Activated T-helper 1 cell treated with anti-CD3 and anti-CD28 coated beads, Interleukin-12 subunit alpha, Interleukin-12 subunit beta, Interleukin-2, Interleukin-4 antibody, amounts not matched to agents 30 ng/mL and 10 ng/mL and 1 ng/mL, durations not matched to agents 14 hours and 24 hours and 36 hours (primary cell): ENCODE measurements at regions of chr1 and their contacts with region 1.

Region 1: GRCh38 chr1:182084487-182085316 is 23.2 kb upstream of the ZNF648 start:
- DNase-seq: peak; percentile 76
- H3K4me3 Mint-ChIP-seq: peak overlapping the region; percentile 26
- H3K27ac Mint-ChIP-seq: peak overlapping the region; percentile 61
- H3K4me1 Mint-ChIP-seq: peaks cover 55% of the 10 kb centered on the region
- H3K27me3 Mint-ChIP-seq: no peaks in the 10 kb centered on the region

Region 2: DNA sequence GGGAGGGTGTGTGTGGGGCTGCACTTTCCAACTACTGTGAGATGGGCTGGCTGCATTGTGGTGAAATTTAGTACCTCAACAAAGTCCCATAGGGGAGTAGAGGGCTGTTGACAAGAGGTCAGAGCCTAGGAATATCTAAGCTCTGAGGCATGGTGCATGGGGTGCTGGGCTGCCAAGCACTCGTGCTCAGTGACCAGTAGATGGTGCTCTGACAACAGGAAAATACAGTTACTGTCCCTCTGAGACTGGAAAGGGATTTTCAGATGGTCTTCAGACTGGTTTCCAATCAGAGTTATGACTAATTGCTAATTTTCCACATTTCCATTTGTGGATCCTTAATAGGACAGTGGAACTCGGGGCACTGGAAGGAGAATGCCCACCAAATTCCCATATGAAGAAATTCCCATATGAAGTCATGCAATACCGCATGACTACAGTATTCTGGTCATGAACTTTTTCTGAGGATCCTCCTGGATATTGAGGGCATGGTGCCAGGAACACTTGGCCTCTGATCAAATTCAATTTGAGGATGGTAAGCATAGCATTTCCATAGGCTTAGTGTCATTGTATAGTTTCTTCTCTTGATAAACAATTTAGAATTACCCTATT is 605.5 kb before region 1 on chr1:
- intact Hi-C with region 1: loop called (anchors 1 kb)
- DNase-seq: peak; percentile 7
- H3K4me3 Mint-ChIP-seq: no peak overlapping the region
- H3K27ac Mint-ChIP-seq: no peak overlapping the region
- H3K4me1 Mint-ChIP-seq: peaks cover 11% of the 10 kb centered on the region
- H3K27me3 Mint-ChIP-seq: peaks cover 34% of the 10 kb centered on the region

Region 3: DNA sequence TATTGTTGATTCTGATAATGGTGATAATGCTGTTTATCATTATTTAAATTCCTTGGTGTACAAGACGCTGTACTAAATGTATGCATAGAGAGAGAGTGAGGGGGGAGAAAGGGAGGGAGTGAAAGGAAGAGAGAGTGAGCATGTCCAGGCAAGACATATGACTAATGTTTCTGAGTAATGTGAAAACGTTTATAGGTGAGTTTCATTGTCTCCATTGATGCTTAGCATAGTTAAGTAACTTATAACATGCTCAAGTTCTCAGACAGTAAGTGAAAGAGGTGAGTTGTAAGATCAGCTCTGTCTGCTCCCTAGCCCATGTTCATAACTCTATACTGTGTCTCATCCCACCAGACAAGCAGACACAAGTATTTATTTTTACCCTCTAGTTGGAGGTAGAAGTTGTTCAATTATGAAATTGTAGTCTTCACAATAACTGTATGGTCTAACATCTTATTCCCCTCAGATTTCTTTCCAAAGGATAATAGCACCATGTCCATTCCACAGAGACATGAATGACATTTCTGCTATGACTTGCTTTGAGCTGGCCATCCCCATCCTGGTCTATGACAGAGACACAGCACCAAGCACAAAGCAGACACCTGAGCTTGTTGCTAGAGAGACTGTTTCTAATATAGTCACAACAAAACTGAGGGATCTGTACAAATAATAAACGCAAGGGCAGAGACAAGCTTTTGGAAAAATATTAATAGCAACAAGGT is 316.3 kb before region 1 on chr1:
- intact Hi-C with region 1: no loop called
- DNase-seq: no peak
- H3K4me3 Mint-ChIP-seq: no peak overlapping the region
- H3K27ac Mint-ChIP-seq: no peak overlapping the region
- H3K4me1 Mint-ChIP-seq: no peaks in the 10 kb centered on the region
- H3K27me3 Mint-ChIP-seq: peaks cover 4% of the 10 kb centered on the region

Region 4: DNA sequence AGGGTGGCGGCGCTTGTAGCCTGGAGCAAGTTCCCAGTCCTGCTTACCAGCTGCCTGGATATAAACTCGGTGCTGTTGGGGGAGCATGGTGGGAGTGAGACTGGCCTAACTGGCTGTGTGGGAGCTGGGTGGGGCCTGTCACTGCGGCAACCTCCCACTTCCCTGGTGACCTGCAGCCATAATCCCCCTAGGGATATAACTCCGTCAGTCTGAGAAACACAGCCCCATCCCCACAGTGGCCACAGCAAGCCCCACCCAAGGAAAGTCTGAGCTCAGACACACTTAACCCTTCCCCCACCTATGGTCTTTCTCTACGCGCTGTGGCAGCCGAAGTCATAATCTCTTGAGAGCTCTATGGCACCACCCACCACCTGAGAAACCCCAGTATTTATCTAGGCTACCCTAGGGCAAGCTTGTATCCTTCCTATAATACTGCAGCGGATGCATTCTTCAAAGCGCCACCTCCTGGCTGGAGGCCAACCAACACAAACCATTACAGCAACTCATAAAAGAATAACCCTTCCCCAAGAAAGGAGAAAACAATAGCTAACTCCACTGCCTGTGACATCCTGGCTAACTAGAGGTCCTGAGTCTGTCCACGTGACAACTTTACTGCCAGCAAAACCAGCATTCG is 80.6 kb before region 1 on chr1:
- intact Hi-C with region 1: no loop called
- DNase-seq: no peak
- H3K4me3 Mint-ChIP-seq: no peak overlapping the region
- H3K27ac Mint-ChIP-seq: no peak overlapping the region
- H3K4me1 Mint-ChIP-seq: no peaks in the 10 kb centered on the region
- H3K27me3 Mint-ChIP-seq: peaks cover 6% of the 10 kb centered on the region

Region 5: GRCh38 chr1:182095965-182096364 is 11.3 kb after region 1 on chr1:
- intact Hi-C with region 1: no loop called
- DNase-seq: no peak
- H3K4me3 Mint-ChIP-seq: no peak overlapping the region
- H3K27ac Mint-ChIP-seq: no peak overlapping the region
- H3K4me1 Mint-ChIP-seq: no peaks in the 10 kb centered on the region
- H3K27me3 Mint-ChIP-seq: peaks cover 27% of the 10 kb centered on the region

Region 6: DNA sequence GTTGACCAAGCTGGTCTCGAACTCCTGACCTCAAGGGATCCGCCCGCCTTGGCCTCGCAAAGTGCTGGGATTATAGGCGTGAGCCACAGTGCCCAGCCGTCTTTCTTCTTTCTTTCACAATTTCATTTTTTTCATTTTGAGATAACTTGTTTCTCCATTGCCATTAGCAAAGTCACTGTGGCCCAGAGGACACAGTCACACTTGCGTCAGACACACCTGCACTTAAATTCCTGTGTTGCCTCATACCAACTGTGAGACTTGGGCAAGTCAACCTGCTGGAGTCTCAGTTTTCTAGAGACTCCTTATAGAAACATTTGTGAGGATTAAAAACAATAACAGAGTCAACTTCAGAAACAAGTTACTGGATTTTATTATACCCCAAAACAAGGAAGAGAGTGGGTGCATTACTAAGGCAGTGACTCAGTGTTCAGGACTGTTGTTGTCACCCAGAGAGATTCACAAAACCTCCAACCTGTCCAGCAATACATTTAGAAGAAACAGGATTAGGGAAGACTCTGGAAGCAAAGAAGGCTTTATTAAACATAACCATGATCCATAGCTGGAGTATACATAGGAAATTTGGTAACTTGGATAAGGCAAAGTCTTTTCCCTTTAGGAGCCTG is 313.2 kb after region 1 on chr1:
- intact Hi-C with region 1: loop called (anchors 1 kb)
- DNase-seq: no peak
- H3K4me3 Mint-ChIP-seq: no peak overlapping the region
- H3K27ac Mint-ChIP-seq: no peak overlapping the region
- H3K4me1 Mint-ChIP-seq: peaks cover 13% of the 10 kb centered on the region
- H3K27me3 Mint-ChIP-seq: peaks cover 13% of the 10 kb centered on the region

Region 7: GRCh38 chr1:182595641-182596240 is 511.0 kb after region 1 on chr1:
- intact Hi-C with region 1: loop called (anchors 2 kb)
- DNase-seq: peak; percentile 34
- H3K4me3 Mint-ChIP-seq: no peak overlapping the region
- H3K27ac Mint-ChIP-seq: no peak overlapping the region
- H3K4me1 Mint-ChIP-seq: peaks cover 16% of the 10 kb centered on the region
- H3K27me3 Mint-ChIP-seq: peaks cover 2% of the 10 kb centered on the region

Region 8: DNA sequence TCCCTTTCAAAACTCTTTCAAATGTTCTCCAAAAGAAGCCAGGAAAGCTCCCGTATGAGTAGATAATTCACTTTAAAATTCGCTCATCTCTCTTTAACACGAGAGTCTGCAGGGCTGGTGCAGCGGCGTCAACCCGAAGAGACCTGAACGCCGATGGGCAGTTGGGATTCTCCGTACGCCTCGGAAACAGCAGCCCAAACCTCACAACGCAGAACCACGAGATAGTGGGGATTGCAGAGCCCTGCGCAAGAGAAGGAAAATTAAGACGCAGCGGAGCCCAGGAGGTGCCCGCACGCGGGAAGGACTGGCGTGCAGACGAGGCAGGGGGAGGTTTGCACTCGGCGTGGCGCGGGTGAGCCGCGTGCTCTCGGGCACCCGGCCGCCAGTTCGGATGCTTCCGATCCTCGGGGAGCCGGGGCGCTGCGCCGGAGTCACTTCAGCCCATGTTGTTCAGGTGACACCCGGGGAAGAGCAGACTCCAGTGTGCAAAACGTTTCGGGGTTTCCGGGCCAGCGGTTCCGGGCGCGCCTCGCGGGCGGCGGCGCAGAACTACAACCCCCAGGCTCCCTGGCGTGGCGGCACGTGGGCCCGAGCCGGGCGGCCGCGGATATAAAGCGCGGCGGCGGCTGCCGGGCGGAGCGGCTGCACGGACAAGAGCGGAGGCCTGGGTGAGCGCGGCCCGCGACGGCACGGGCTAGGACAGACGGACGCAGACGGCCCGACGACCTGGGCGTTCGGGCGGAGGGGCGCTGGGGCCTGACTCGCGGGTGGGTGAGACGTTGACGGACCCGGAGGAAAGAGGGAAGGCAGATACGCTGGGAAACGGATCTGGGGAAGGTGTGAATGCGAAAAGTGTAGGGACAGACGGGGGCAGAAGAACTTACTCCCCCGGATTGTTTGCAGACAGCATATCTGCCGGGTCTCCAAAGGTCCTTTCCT is 704.7 kb after region 1 on chr1 and contains the start of gene NPL:
- intact Hi-C with region 1: loop called (anchors 1 kb)
- DNase-seq: peak; percentile 86
- H3K4me3 Mint-ChIP-seq: peak within 1 kb of the TSS; percentile 92
- H3K27ac Mint-ChIP-seq: peak within 1 kb of the TSS; percentile 86
- H3K4me1 Mint-ChIP-seq: peaks cover 18% of the 10 kb centered on the region
- H3K27me3 Mint-ChIP-seq: peaks cover 14% of the 10 kb centered on the region
- total RNA-seq, gene NPL: 6.4 and 6.9 TPM in 2 replicates